HCT116 (cell line): ENCODE measurements at regions of chr2 and their contacts with region 1.

Region 1: GRCh38 chr2:84631047-84631446 is 114.7 kb downstream of the DNAH6 start:
- DNase-seq: peak; percentile 53
- ATAC-seq: peak; percentile 95
- H3K4me3 ChIP-seq: no peak overlapping the region
- H3K27ac ChIP-seq: no peak overlapping the region
- H3K4me1 ChIP-seq: no peaks in the 10 kb centered on the region
- H3K27me3 ChIP-seq: no peaks in the 10 kb centered on the region
- CTCF ChIP-seq: peak; percentile 58 to 76 (median 73)
- POLR2A ChIP-seq: no peak
- RAD21 ChIP-seq: peak; percentile 89

Region 2: GRCh38 chr2:84314901-84315330 is 316.1 kb before region 1 on chr2:
- CTCF ChIA-PET with region 1: no interaction called
- POLR2A ChIA-PET with region 1: no interaction called
- RAD21 ChIA-PET with region 1: no interaction called
- intact Hi-C with region 1: loop called (anchors 5 kb)
- DNase-seq: peak; percentile 75
- ATAC-seq: peak; percentile 99
- H3K4me3 ChIP-seq: no peak overlapping the region
- H3K27ac ChIP-seq: no peak overlapping the region
- H3K4me1 ChIP-seq: no peaks in the 10 kb centered on the region
- H3K27me3 ChIP-seq: no peaks in the 10 kb centered on the region
- CTCF ChIP-seq: peak; percentile 71 to 97 (median 97); a peak in 5 of 6 replicates
- POLR2A ChIP-seq: no peak
- RAD21 ChIP-seq: peak; percentile 96

Region 3: GRCh38 chr2:85011747-85012146 is 380.7 kb after region 1 on chr2:
- CTCF ChIA-PET with region 1: no interaction called
- POLR2A ChIA-PET with region 1: no interaction called
- RAD21 ChIA-PET with region 1: no interaction called
- intact Hi-C with region 1: loop called (anchors 5 kb)
- DNase-seq: no peak
- ATAC-seq: peak; percentile 56; the same call in 1 of the 2 replicates
- H3K4me3 ChIP-seq: no peak overlapping the region
- H3K27ac ChIP-seq: no peak overlapping the region
- H3K4me1 ChIP-seq: peaks cover 6 to 26% of the 10 kb centered on the region in 2 experiments; a peak in 3 of 4 replicates
- H3K27me3 ChIP-seq: no peaks in the 10 kb centered on the region
- CTCF ChIP-seq: peak in 2 of 3 experiments; percentile 40 to 46; a peak in 3 of 6 replicates
- POLR2A ChIP-seq: no peak
- RAD21 ChIP-seq: no peak